ENCODE measurements at regions of chr3 and their contacts with region 1.

Region 1: GRCh38 chr3:42772670-42773408 is at the start of gene CCDC13:
- DNase-seq: peak; percentile 96
- H3K4me3 Mint-ChIP-seq: peak within 1 kb of the TSS; percentile 78
- H3K27ac Mint-ChIP-seq: peak within 1 kb of the TSS; percentile 4
- H3K4me1 Mint-ChIP-seq: peaks cover 10% of the 10 kb centered on the region
- H3K27me3 Mint-ChIP-seq: no peaks in the 10 kb centered on the region
- total RNA-seq, gene CCDC13: 0.31 TPM in 1 of 2 experiments, not detected in the other

Region 2: DNA sequence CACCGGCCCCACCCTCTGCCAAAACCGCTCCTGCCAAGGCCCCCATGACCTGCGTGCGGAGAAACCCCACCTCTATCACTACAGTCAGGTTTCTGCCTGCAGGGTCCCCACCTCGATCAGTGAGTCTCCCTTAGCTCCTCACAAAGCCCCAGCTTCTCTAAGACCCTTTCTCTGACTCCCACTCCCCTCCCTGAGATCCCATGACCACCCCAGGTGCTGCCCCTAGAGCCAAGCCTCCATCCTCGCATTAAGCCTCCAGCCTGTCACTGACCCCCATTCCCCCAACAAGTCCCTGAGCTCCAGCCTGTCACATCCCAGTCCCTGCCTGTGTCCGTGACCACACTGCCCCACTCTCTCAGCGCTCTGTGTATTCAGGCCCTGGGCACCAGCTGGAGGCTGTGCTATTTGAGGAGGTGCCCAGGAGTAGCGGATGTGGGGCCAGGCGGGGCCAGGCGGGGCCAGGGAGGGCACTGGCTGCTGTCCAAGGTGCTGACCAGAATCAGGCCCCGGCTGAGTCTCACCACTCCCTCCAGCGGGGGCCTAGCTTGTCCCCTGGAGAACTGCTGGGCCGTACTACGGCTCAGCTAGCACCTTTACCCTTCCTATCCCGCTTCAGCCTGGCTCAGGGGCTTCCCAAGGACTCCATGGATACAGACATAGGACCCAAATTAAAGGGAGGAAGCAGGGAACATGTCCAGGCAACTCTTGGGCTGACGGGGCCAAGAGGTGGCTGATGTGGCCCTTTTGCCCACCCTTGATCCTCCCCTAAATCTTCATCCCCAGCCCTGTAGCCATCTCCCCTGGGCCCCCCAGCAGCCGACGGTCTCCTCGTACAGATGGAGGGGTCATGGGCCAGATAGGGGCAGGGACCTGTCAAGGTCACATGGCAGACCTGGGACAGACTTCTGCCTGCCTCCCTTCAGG is 71.4 kb before region 1 on chr3:
- CTCF ChIA-PET with region 1: no interaction called
- intact Hi-C with region 1: loop called (anchors 1 kb)
- DNase-seq: peak; percentile 75
- H3K4me3 Mint-ChIP-seq: no peak overlapping the region
- H3K27ac Mint-ChIP-seq: no peak overlapping the region
- H3K4me1 Mint-ChIP-seq: no peaks in the 10 kb centered on the region
- H3K27me3 Mint-ChIP-seq: no peaks in the 10 kb centered on the region

Region 3: GRCh38 chr3:42755681-42756578 is 16.9 kb before region 1 on chr3:
- CTCF ChIA-PET with region 1: no interaction called
- intact Hi-C with region 1: no loop called
- DNase-seq: peak; percentile 22
- H3K4me3 Mint-ChIP-seq: no peak overlapping the region
- H3K27ac Mint-ChIP-seq: no peak overlapping the region
- H3K4me1 Mint-ChIP-seq: peaks cover 2% of the 10 kb centered on the region
- H3K27me3 Mint-ChIP-seq: no peaks in the 10 kb centered on the region

Region 4: GRCh38 chr3:42804106-42804830 is 31.4 kb after region 1 on chr3 and contains the start of gene HIGD1A:
- CTCF ChIA-PET with region 1: no interaction called
- intact Hi-C with region 1: loop called (anchors 2 kb)
- DNase-seq: peak; percentile 95
- H3K4me3 Mint-ChIP-seq: peak within 1 kb of the TSS; percentile 96
- H3K27ac Mint-ChIP-seq: peak within 1 kb of the TSS; percentile 86
- H3K4me1 Mint-ChIP-seq: peaks cover 42% of the 10 kb centered on the region
- H3K27me3 Mint-ChIP-seq: peaks cover 11% of the 10 kb centered on the region
- total RNA-seq, gene HIGD1A: 57.1 to 66.4 TPM

Region 5: GRCh38 chr3:42831321-42831713 is 58.5 kb after region 1 on chr3:
- CTCF ChIA-PET with region 1: no interaction called
- intact Hi-C with region 1: no loop called
- DNase-seq: peak; percentile 92
- H3K4me3 Mint-ChIP-seq: no peak overlapping the region
- H3K27ac Mint-ChIP-seq: no peak overlapping the region
- H3K4me1 Mint-ChIP-seq: no peaks in the 10 kb centered on the region
- H3K27me3 Mint-ChIP-seq: no peaks in the 10 kb centered on the region